ENCODE measurements at regions of chr11 and their contacts with region 1.

Region 1: DNA sequence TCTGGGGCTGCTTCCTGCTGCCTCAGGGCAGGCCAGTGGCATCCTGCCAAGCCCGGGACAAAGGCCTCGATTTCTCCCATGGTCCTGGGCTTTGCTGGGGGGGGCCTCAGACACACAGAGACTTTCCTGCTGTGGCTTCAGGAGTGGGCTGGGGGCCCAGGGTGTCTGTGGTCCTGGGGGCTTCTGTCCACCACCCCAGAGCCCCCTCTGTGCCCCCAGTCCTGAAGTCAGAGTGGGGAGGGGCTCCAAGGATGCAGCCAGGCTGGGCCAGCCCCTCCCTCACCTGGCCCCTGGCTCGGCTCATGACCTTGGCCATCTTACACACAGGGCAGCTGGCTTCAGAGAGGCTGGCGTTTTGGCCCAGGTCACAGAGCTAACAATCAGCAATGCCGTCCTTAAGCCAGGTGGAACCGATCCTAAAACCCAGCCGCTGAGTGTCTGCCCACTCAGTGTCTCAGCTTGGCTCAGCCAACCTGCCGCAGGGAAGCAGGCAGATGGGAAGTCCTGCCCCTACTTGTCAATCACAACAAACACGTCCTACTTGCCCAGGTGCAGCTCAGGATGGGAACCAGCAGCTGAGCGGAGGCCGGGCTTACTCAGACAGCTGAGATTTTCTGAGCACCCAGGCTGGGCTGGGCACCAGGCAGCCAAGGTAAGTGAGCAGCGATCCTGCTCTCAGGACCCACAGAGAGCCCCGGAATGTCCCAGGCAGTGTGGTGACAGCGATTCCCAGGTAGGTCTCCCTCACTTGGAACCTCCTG is 34.6 kb downstream of the OSBPL5 start:
- DNase-seq: peak in 1 of 14 experiments; percentile 2
- ATAC-seq: no peak
- H3K4me3 ChIP-seq: no peak overlapping the region
- H3K4me3 Mint-ChIP-seq: no peak overlapping the region
- H3K27ac ChIP-seq: no peak overlapping the region
- H3K27ac Mint-ChIP-seq: no peak overlapping the region
- H3K4me1 ChIP-seq: peaks cover 4% of the 10 kb centered on the region
- H3K4me1 Mint-ChIP-seq: no peaks in the 10 kb centered on the region
- H3K27me3 ChIP-seq: no peaks in the 10 kb centered on the region
- H3K27me3 Mint-ChIP-seq: no peaks in the 10 kb centered on the region
- CTCF ChIP-seq: no peak

Region 2: DNA sequence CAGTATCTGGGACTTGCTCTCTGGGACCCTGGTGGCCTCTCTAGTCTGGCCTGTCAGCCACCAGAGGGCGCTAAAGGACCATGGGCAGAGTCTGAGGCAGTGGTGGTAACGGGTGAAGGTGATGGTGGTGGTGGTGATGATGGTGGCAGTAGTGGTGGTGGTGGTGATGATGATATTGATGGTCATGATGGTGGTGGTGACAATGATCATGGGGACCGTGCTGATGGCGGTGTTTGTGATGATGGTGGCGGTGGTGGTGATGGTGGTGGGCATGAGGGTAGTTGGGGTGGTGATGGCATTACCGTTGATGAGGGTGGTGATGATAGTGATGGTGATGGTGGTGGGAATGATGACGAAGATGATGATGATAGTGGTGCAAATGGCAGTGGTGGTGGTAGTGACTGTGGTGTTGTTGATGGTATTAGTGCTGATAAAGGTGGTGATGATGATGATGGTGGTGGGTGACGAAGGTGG is 702.1 kb before region 1 on chr11:
- CTCF ChIA-PET with region 1: no interaction called
- POLR2A ChIA-PET with region 1: no interaction called
- intact Hi-C with region 1: no loop called
- DNase-seq: peak; percentile 80 to 94 (median 88)
- ATAC-seq: peak; percentile 97
- H3K4me3 ChIP-seq: no peak overlapping the region
- H3K4me3 Mint-ChIP-seq: no peak overlapping the region
- H3K27ac ChIP-seq: no peak overlapping the region
- H3K27ac Mint-ChIP-seq: no peak overlapping the region
- H3K4me1 ChIP-seq: peaks cover 3% of the 10 kb centered on the region
- H3K4me1 Mint-ChIP-seq: no peaks in the 10 kb centered on the region
- H3K27me3 ChIP-seq: no peaks in the 10 kb centered on the region
- H3K27me3 Mint-ChIP-seq: no peaks in the 10 kb centered on the region
- CTCF ChIP-seq: peak; percentile 86

Region 3: DNA sequence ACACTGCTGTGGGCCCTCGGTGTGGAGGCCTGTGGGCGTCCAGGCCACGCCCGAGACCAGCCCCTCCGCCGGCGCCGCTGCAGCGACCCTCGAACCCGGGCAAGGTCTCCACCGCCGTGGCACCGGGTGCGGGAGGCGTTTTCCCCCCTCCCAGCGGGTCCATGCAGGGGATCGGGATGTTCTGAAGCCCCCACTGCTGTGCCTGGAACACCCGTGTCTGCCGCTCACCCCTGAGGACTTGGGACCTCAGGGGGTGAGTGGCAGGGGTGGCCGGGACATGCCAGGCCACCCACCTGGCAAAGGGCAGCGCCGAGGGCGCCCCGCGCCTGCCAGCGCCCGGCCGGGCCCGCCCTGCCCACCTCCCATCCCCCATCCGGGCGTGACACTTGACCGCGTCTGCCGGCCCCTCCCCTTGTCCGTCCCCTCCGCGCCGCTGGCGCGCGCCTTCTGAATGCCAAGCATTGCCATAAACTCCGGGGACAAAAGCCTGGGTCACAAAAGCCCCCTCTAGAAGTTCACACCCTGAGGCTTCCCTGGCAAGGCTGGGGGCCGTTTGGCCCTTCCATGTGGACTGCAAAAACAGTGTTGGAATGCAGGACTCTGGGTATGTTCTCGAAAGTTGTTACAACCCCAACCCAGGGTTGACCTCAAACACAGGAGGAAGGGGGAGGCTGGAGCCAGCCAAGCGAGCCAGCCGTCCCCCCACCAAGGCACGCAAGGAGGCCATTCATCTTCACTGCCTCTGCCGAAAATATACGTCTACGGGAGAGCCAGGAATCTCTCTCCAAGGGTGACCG is 429.9 kb before region 1 on chr11:
- CTCF ChIA-PET with region 1: no interaction called
- POLR2A ChIA-PET with region 1: no interaction called
- intact Hi-C with region 1: no loop called
- DNase-seq: peak in 4 of 14 experiments; percentile 26 to 45 (median 30)
- ATAC-seq: no peak
- H3K4me3 ChIP-seq: peak overlapping the region; percentile 53
- H3K4me3 Mint-ChIP-seq: peak overlapping the region; percentile 80
- H3K27ac ChIP-seq: no peak overlapping the region
- H3K27ac Mint-ChIP-seq: peak overlapping the region; percentile 33
- H3K4me1 ChIP-seq: peaks cover 18% of the 10 kb centered on the region
- H3K4me1 Mint-ChIP-seq: peaks cover 7% of the 10 kb centered on the region
- H3K27me3 ChIP-seq: no peaks in the 10 kb centered on the region
- H3K27me3 Mint-ChIP-seq: no peaks in the 10 kb centered on the region
- CTCF ChIP-seq: no peak

Region 4: GRCh38 chr11:3184732-3185347 is 54.3 kb after region 1 on chr11:
- CTCF ChIA-PET with region 1: no interaction called
- POLR2A ChIA-PET with region 1: no interaction called
- intact Hi-C with region 1: loop called in 1 of 2 experiments (anchors 5 kb)
- DNase-seq: no peak
- ATAC-seq: no peak
- H3K4me3 ChIP-seq: no peak overlapping the region
- H3K4me3 Mint-ChIP-seq: no peak overlapping the region
- H3K27ac ChIP-seq: no peak overlapping the region
- H3K27ac Mint-ChIP-seq: no peak overlapping the region
- H3K4me1 ChIP-seq: no peaks in the 10 kb centered on the region
- H3K4me1 Mint-ChIP-seq: no peaks in the 10 kb centered on the region
- H3K27me3 ChIP-seq: no peaks in the 10 kb centered on the region
- H3K27me3 Mint-ChIP-seq: peaks cover 4% of the 10 kb centered on the region
- CTCF ChIP-seq: no peak